ENCODE measurements at regions of chr2 and their contacts with region 1.

Region 1: DNA sequence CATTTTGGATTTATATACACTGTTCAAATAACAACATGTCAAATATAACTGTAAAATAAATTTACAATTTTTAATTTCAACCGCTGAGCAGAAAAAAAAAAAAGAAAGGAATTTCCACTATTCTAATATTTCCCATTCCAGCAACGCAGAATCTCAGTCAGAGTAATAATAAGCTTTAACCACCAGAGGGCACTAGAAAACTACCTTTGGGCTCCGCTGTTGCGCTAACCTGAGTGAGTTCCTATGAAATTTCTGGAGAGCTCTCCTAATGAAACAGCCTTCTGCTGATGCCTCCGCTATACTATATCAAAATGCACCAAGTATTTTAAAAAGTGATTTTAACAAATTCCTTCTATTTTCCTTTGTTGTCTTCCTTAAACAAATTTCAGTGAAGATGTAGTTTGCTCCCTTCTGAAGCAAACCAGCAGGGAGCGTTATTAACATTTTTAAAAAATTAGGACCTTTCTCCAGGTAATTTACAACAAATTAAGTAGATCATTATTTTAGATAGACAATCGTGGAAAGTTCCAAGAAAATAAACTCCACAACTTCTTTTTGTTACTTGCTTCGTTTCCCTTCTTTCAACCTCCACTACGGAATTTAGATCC is 23.0 kb downstream of the ERMN start:
- DNase-seq: peak; percentile 50
- ATAC-seq: peak; percentile 75
- H3K4me3 Mint-ChIP-seq: no peak overlapping the region
- H3K27ac Mint-ChIP-seq: no peak overlapping the region
- H3K4me1 Mint-ChIP-seq: peaks cover 30% of the 10 kb centered on the region
- H3K27me3 Mint-ChIP-seq: peaks cover 3% of the 10 kb centered on the region

Region 2: GRCh38 chr2:157279331-157279730 is 23.3 kb before region 1 on chr2:
- CTCF ChIA-PET with region 1: interaction called, 10 read pairs
- POLR2A ChIA-PET with region 1: no interaction called
- intact Hi-C with region 1: no loop called
- DNase-seq: no peak
- ATAC-seq: no peak
- H3K4me3 Mint-ChIP-seq: no peak overlapping the region
- H3K27ac Mint-ChIP-seq: no peak overlapping the region
- H3K4me1 Mint-ChIP-seq: no peaks in the 10 kb centered on the region
- H3K27me3 Mint-ChIP-seq: peaks cover 29% of the 10 kb centered on the region

Region 3: GRCh38 chr2:157327621-157328500 is 25.3 kb after region 1 on chr2:
- CTCF ChIA-PET with region 1: interaction called, 189 read pairs
- POLR2A ChIA-PET with region 1: no interaction called
- intact Hi-C with region 1: no loop called
- DNase-seq: peak; percentile 95
- ATAC-seq: peak; percentile 91
- H3K4me3 Mint-ChIP-seq: peak overlapping the region; percentile 29
- H3K27ac Mint-ChIP-seq: peak overlapping the region; percentile 72
- H3K4me1 Mint-ChIP-seq: peaks cover 61% of the 10 kb centered on the region
- H3K27me3 Mint-ChIP-seq: no peaks in the 10 kb centered on the region

Region 4: DNA sequence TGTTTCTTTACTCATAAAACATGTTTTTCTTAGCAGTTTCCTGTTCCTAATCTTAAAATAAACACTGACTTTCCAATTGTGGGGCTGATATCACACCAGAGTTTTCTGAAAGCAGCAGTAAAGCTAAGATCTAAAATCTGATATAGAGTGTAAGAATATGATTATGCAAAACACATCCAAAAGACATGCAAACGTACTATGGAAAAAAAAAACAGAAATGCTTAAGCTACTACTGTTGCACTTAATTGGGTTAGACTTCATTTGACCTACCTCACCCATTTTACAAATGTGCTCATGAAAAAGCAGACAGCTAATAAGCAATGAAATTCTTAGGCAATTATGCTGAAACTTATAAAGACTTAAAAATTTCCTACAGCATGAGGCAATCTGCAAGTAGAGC is 130.8 kb after region 1 on chr2:
- CTCF ChIA-PET with region 1: interaction called, 29 read pairs
- POLR2A ChIA-PET with region 1: interaction called, 5 read pairs
- intact Hi-C with region 1: no loop called
- DNase-seq: no peak
- ATAC-seq: no peak
- H3K4me3 Mint-ChIP-seq: peak overlapping the region; percentile 93
- H3K27ac Mint-ChIP-seq: peak overlapping the region; percentile 95
- H3K4me1 Mint-ChIP-seq: peaks cover 60% of the 10 kb centered on the region
- H3K27me3 Mint-ChIP-seq: no peaks in the 10 kb centered on the region

Region 5: DNA sequence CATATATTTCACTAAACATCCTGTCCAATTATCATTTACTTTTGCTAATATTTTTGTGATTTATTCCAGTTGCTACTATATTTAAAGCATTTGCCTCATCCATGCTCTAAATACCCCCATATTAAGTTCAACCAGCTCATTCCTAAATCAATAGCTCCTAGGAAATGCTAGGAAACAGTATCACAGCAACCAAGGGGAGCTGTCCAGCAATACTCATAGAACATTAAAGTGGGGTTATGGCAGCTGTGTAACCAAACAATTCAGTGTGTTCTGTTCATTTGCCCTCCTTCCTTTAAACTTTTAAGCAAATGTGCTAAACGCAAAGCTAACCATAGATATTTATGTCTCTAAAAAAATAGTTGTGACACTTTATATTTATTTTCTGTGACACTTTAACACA is 285.0 kb after region 1 on chr2:
- CTCF ChIA-PET with region 1: interaction called, 17 read pairs
- POLR2A ChIA-PET with region 1: no interaction called
- intact Hi-C with region 1: no loop called
- DNase-seq: no peak
- ATAC-seq: no peak
- H3K4me3 Mint-ChIP-seq: no peak overlapping the region
- H3K27ac Mint-ChIP-seq: no peak overlapping the region
- H3K4me1 Mint-ChIP-seq: peaks cover under 1% of the 10 kb centered on the region
- H3K27me3 Mint-ChIP-seq: no peaks in the 10 kb centered on the region

Region 6: DNA sequence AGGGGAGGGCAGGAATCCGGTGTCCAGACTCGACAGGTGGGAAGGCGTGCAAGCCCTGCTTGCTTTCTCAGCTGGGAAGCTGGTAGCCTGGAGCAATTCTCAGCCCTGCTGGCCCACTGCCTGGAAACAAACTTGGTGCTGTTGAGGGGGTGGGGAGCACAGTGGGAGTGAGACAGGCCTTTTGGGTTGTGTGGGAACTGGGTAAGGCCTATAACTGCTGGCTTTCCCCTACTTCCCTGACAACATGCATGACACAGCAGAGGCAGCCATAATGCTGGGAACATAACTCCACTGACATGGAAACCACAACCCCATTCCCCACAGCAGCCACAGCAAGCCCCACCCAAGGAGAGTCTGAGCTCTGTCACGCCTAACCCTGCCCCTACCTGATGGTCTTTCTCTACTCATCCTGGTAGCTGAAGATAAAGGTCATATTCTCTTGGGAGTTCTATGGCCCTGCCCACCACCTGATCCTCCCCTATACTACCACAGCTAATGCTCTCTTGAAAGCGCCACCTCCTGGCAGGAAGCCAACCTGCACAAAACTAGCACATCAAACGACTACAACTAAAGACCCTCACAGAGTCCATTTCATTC is 449.0 kb after region 1 on chr2:
- CTCF ChIA-PET with region 1: interaction called, 6 read pairs
- POLR2A ChIA-PET with region 1: no interaction called
- intact Hi-C with region 1: loop called in 1 of 2 experiments (anchors 5 kb)
- DNase-seq: peak; percentile 47
- ATAC-seq: peak; percentile 44
- H3K4me3 Mint-ChIP-seq: no peak overlapping the region
- H3K27ac Mint-ChIP-seq: no peak overlapping the region
- H3K4me1 Mint-ChIP-seq: peaks cover 10% of the 10 kb centered on the region
- H3K27me3 Mint-ChIP-seq: no peaks in the 10 kb centered on the region

Region 7: DNA sequence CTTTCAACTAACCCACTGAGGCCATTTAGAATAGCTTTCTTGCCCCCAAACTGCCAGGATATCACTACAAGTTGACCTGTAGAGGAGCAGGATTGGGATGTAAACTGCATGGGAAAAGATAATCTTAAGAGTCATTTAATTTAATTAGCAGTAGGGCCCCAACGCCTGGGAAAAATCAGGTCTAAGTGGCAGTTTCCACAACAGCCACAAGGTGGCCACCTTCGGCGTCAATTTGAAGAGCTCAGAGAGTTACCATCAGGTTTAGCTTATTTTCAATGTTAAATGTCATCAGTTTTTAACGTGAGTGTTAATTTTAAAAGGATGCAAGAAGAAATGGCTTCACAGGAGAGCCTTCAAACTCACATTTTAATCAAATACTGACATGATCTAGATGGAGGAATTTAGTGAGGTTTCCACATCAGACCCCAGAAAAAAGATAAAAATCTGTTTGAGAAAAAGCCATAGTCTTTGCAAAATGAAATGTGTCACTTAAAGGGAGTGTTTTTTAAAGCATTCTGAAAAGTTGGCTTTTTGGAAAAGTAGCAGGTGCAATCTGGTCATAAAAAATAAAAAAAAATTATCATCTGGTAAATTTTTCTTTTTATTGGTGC is 721.8 kb after region 1 on chr2:
- CTCF ChIA-PET with region 1: interaction called, 11 read pairs
- POLR2A ChIA-PET with region 1: no interaction called
- intact Hi-C with region 1: no loop called
- DNase-seq: peak; percentile 74
- ATAC-seq: peak; percentile 49
- H3K4me3 Mint-ChIP-seq: no peak overlapping the region
- H3K27ac Mint-ChIP-seq: no peak overlapping the region
- H3K4me1 Mint-ChIP-seq: peaks cover 6% of the 10 kb centered on the region
- H3K27me3 Mint-ChIP-seq: no peaks in the 10 kb centered on the region